HEK293 (cell line): ENCODE measurements at regions of chr13 and their contacts with region 1.

Region 1: GRCh38 chr13:77480066-77480465 is 55.4 kb upstream of the SCEL start:
- H3K4me3 ChIP-seq: no peak overlapping the region
- H3K27ac ChIP-seq: no peak overlapping the region
- H3K4me1 ChIP-seq: no peaks in the 10 kb centered on the region
- CTCF ChIP-seq: no peak

Region 2: DNA sequence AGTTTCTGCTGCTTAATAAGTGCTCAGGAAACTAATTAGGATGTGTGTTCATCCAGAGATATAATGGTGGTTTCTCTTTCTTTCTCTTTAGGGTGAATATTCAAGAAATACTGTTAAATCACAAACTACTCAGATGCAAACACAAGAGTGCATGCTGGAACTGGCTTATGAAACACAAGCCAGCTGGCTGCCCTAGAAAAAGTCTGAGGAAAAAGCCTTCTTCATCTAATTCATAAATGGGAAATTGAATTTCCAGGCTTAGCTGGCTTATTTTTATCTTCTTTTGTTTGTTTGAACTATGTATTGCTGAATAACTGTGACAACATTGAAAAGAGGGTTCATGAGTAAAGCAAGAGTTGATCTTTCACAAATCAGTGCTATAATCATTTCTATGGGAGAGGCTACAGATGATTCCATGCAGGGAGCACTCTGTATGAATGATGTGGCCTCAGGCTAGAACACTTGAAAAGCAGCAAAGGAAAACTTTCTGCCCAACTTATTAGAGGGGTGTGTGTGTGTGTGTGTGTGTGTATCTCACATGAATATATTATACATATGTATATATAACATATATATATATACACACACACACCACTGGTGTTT is 14.4 kb before region 1 on chr13:
- CTCF ChIA-PET with region 1: interaction called, 12 read pairs
- POLR2A ChIA-PET with region 1: no interaction called
- H3K4me3 ChIP-seq: no peak overlapping the region
- H3K27ac ChIP-seq: no peak overlapping the region
- H3K4me1 ChIP-seq: no peaks in the 10 kb centered on the region
- CTCF ChIP-seq: no peak

Region 3: DNA sequence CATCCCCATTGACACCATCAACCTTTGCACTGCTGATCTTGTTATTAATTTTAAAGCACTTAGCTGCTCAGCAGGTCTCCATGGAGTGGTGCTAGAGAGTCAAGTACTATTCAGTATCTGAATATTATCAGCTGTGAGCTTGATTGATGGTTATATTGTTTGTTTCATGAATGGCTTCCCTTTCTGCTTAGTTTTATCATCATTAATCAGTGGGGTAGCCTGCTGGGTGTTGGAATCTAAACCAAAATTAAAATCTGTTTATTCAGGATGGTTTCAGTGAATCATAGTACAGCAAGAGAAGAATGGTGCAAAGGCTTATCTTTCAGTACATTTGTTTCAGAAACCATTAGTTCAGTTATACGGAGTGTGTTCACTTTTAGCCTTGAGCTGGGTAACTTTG is 12.9 kb after region 1 on chr13:
- CTCF ChIA-PET with region 1: interaction called, 18 read pairs
- POLR2A ChIA-PET with region 1: no interaction called
- H3K4me3 ChIP-seq: no peak overlapping the region
- H3K27ac ChIP-seq: no peak overlapping the region
- H3K4me1 ChIP-seq: no peaks in the 10 kb centered on the region
- CTCF ChIP-seq: no peak

Region 4: GRCh38 chr13:77599351-77599750 is 119.3 kb after region 1 on chr13:
- CTCF ChIA-PET with region 1: no interaction called
- POLR2A ChIA-PET with region 1: no interaction called
- H3K4me3 ChIP-seq: no peak overlapping the region
- H3K27ac ChIP-seq: no peak overlapping the region
- H3K4me1 ChIP-seq: no peaks in the 10 kb centered on the region
- CTCF ChIP-seq: no peak